Psoas muscle (tissue), 8 donors: ENCODE measurements at regions of chr1 and their contacts with region 1.

Region 1: DNA sequence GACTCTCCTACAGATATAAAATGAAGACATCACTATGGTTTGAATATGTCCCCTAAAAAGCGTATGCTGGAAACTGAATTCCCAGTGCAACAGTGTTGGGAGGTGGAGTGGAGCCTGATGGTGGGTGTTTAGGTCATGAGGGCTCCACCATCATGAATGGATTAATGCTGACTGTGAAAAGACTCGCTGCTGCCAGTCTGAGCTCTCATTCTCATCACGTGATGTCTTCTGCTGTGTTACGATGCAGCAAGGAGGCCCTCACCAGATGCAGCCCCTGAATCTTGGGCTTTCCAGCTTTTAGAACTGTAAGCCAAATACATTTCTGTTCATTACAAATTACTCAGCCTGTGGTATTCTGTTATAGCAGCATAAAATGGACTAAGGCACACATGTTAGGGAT is 73.8 kb upstream of the PPP2R5A start:
- DNase-seq: no peak
- ATAC-seq: no peak
- H3K4me3 ChIP-seq: no peak overlapping the region
- H3K27ac ChIP-seq: no peak overlapping the region
- H3K4me1 ChIP-seq: peaks cover 8% of the 10 kb centered on the region
- H3K27me3 ChIP-seq: no peaks in the 10 kb centered on the region
- CTCF ChIP-seq: no peak

Region 2: GRCh38 chr1:212247179-212247721 is 35.9 kb after region 1 on chr1:
- intact Hi-C with region 1: loop called in 1 of 2 experiments (anchors 1 kb)
- DNase-seq: no peak
- ATAC-seq: peak in 1 of 4 donors; percentile 33
- H3K4me3 ChIP-seq: no peak overlapping the region
- H3K27ac ChIP-seq: no peak overlapping the region
- H3K4me1 ChIP-seq: peaks cover 14% of the 10 kb centered on the region
- H3K27me3 ChIP-seq: no peaks in the 10 kb centered on the region
- CTCF ChIP-seq: no peak

Region 3: GRCh38 chr1:212455803-212456528 is 244.6 kb after region 1 on chr1:
- intact Hi-C with region 1: no loop called
- DNase-seq: peak; percentile 89 to 93
- ATAC-seq: peak; percentile 87 to 96 (median 92)
- H3K4me3 ChIP-seq: peak overlapping the region; percentile 54
- H3K27ac ChIP-seq: peak overlapping the region; percentile 73
- H3K4me1 ChIP-seq: peaks cover 11% of the 10 kb centered on the region
- H3K27me3 ChIP-seq: no peaks in the 10 kb centered on the region
- CTCF ChIP-seq: peak; percentile 99